Activated naive CD4-positive, alpha-beta T cell treated with anti-CD3 and anti-CD28 coated beads for 36 hours (primary cell): ENCODE measurements at regions of chr17 and their contacts with region 1.

Region 1: DNA sequence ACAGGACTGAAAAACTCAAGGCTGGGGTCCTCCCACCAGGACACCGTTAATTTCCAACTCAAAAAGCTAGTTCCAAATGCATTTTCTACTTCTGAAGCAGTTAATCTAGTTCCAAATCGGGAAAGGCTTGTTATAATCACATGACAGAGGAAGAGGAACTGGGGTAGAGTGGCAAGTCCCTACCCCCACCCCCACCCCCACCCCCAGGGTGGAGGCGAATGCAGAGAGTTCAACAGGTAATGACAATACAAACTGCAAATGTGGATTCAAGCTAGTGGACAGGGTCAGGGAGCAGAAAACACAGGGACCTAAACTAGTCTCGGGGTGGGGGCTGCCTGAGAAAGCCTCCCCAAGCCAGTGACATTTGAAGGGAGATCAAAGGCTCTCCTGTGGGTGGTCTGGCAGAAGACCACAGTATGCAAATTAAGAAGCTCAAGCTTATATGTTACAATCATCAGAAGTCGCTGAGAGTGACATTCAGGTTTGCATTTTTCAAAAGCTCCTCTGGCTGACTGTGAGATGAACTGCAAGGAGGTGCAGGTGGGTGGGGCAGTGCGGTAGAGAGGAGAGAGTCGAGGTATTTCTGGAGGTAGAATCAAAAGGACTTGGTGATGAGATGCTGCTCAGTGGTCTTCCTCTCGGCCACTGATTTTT is 56.4 kb upstream of the SLC25A19 start:
- DNase-seq: peak; percentile 62
- H3K4me3 Mint-ChIP-seq: peak overlapping the region; percentile 39
- H3K27ac Mint-ChIP-seq: peak overlapping the region; percentile 66
- H3K4me1 Mint-ChIP-seq: peaks cover 94% of the 10 kb centered on the region
- H3K27me3 Mint-ChIP-seq: no peaks in the 10 kb centered on the region

Region 2: GRCh38 chr17:75250009-75250471 is 95.6 kb before region 1 on chr17:
- CTCF ChIA-PET with region 1: no interaction called
- intact Hi-C with region 1: no loop called
- DNase-seq: peak; percentile 90
- H3K4me3 Mint-ChIP-seq: peak overlapping the region; percentile 61
- H3K27ac Mint-ChIP-seq: peak overlapping the region; percentile 93
- H3K4me1 Mint-ChIP-seq: peaks cover 74% of the 10 kb centered on the region
- H3K27me3 Mint-ChIP-seq: no peaks in the 10 kb centered on the region

Region 3: DNA sequence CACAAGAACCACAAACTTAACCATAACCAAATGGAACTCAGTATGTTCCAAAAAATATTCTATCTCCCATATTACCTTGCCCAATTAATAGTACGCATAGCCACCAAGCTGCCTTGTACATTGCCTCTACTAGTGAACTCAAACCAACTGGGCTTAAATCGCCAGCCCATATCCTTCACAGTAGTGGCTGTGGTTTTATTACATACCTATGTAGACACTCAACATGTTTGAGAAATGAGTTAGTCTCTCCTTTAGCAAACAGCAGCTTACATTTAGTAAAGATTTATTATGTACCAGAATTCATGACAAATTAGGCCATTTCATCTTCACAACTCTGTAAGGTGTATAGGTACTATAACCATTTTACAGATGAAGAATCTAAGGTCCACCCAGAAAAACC is 18.4 kb after region 1 on chr17:
- CTCF ChIA-PET with region 1: interaction called, 3 read pairs
- intact Hi-C with region 1: loop called (anchors 1 kb)
- DNase-seq: no peak
- H3K4me3 Mint-ChIP-seq: no peak overlapping the region
- H3K27ac Mint-ChIP-seq: peak overlapping the region; percentile 82
- H3K4me1 Mint-ChIP-seq: peaks cover 93% of the 10 kb centered on the region
- H3K27me3 Mint-ChIP-seq: no peaks in the 10 kb centered on the region

Region 4: DNA sequence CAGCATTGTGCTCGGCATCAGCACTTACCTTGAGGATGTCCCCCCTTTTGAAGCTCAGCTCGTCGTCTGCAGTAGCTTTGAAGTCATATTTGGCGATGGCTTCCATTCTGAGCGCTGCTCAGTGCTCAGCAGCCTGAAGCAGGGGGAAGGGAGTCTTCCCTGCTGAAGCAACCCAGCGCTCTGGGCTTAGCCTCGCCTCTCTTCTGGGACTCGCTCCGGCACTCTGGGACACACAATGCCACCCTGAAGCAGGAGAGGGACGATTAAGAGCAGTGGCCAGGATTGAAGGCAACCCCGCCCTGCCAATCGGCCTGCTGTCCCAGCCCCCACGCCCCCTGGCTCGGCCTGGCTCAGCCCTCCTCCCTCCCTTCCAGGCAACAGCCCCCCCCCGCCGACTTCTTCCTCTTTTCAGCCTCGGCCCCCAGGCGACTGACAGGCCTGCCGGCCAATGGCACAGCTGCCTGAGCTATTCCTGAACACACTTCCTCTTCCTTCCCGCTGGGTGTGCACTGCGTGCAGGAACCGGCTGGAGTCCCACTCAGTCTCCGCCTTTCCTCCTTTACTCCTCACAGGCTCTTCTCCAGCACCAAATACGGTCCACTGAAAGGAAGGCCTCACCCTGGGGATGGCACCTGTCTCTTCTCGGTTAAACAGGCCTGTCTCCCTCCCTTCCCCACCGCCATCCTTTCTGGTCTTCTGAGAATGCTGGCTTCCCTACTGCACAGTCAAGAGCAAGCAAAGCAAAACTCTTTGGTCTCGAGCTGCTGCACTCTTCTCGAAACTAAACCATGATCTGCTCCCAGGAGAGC is 48.1 kb after region 1 on chr17:
- CTCF ChIA-PET with region 1: interaction called, 5 read pairs
- intact Hi-C with region 1: loop called (anchors 2 kb)
- DNase-seq: peak; percentile 91
- H3K4me3 Mint-ChIP-seq: peak overlapping the region; percentile 93
- H3K27ac Mint-ChIP-seq: peak overlapping the region; percentile 66
- H3K4me1 Mint-ChIP-seq: peaks cover 81% of the 10 kb centered on the region
- H3K27me3 Mint-ChIP-seq: no peaks in the 10 kb centered on the region